ENCODE measurements at regions of chr2 and their contacts with region 1.

Region 1: GRCh38 chr2:46984642-46985476 is 69.3 kb upstream of the MCFD2 start:
- DNase-seq: no peak
- ATAC-seq: peak in 2 of 4 donors; percentile 1 to 20
- H3K4me3 ChIP-seq: no peak overlapping the region
- H3K27ac ChIP-seq: peak overlapping the region in 2 of 4 donors; percentile 36 to 44
- H3K4me1 ChIP-seq: peaks cover 28 to 62% (median 35%) of the 10 kb centered on the region in 3 donors
- H3K27me3 ChIP-seq: no peaks in the 10 kb centered on the region
- CTCF ChIP-seq: no peak

Region 2: DNA sequence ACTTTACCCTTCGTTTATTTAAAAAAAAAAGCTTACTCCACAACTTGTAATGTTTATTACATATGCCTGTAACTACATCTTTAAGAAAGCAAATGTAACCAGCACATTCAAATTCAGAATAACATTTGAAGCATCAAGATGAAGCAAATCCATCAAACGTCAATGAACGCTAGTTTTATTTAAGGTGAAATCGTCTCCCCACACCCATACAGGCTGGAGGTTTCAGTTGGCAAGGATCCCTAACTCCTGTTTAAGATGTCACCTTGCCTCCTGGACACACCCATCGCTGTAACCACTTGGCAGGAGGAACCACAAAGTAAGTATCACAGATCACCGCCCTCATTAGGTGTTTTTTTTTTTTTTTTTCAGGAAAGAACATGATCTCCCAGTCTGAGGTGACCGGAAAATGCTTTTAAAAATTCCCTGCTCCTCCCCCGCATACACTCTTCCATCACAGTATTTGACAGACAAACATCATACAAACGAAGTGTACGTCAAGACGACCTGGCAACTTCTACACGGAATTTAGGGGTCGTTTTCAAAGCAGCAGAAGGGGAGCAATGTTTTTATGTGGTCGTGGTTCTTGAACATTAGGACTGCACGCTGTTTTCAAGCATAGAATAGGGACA is 190.0 kb after region 1 on chr2:
- intact Hi-C with region 1: loop called in 1 of 3 experiments (anchors 5 kb)
- DNase-seq: peak in 4 of 6 donors; percentile 56 to 69 (median 62)
- ATAC-seq: peak; percentile 6 to 38 (median 14)
- H3K4me3 ChIP-seq: peak overlapping the region; percentile 72 to 80 (median 76)
- H3K27ac ChIP-seq: peak overlapping the region; percentile 82 to 99 (median 99)
- H3K4me1 ChIP-seq: peaks cover 6 to 46% (median 45%) of the 10 kb centered on the region in 3 donors
- H3K27me3 ChIP-seq: no peaks in the 10 kb centered on the region
- CTCF ChIP-seq: no peak

Region 3: GRCh38 chr2:47323009-47323821 is 338.4 kb after region 1 on chr2:
- intact Hi-C with region 1: loop called in 1 of 3 experiments (anchors 5 kb)
- DNase-seq: peak; percentile 51 to 84 (median 75)
- ATAC-seq: peak; percentile 93 to 99 (median 98)
- H3K4me3 ChIP-seq: no peak overlapping the region
- H3K27ac ChIP-seq: no peak overlapping the region
- H3K4me1 ChIP-seq: peaks cover 0 to 3% (median 3%) of the 10 kb centered on the region in 3 donors
- H3K27me3 ChIP-seq: no peaks in the 10 kb centered on the region
- CTCF ChIP-seq: peak; percentile 88 to 97 (median 94)